Activated T-helper 1 cell treated with anti-CD3 and anti-CD28 coated beads, Interleukin-12 subunit alpha, Interleukin-12 subunit beta, Interleukin-2, Interleukin-4 antibody, amounts not matched to agents 30 ng/mL and 10 ng/mL and 1 ng/mL, durations not matched to agents 14 hours and 24 hours and 36 hours (primary cell): ENCODE measurements at regions of chr1 and their contacts with region 1.

Region 1: DNA sequence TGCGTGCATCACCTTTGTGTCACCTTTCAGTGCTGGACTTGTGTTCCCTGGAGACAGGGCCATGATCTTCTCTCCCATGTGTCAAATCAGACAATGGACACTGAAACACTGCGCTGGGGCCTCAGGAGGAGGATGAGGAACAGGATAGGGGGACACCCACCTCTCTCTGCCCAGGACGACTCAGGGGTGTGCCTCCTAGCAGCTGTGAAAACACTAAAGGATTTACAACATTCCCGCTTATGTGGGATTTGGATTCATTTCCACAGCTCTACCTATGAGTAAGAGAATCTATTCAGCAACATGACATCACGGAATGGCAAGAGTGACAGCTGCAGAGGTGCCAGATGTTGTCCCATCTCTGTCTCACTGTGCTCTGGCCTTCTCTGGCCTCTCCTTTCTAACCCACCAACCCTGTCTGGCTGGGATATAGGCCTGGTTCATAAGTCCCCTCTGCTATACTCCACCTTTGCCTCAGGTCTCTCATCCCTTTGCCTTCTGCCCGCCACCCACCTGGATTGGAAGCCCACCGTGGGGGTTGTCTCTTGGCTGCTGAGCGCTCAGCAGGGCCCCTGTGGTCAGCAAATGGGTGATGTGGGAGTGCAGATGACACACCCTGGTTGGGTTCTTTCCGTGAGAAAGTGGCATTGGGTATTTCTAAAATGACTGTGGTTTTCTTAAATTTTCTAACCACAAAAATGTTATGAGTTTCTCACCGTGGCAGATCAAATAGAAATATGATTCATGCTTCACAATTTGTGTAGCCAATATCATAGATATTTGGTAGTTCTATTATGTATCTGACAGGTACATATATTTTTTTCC is 47.1 kb upstream of the TLR5 start:
- DNase-seq: no peak
- H3K4me3 Mint-ChIP-seq: no peak overlapping the region
- H3K27ac Mint-ChIP-seq: peak overlapping the region; percentile 53
- H3K4me1 Mint-ChIP-seq: peaks cover 12% of the 10 kb centered on the region
- H3K27me3 Mint-ChIP-seq: peaks cover 12% of the 10 kb centered on the region

Region 2: GRCh38 chr1:222892137-222892769 is 297.9 kb before region 1 on chr1:
- intact Hi-C with region 1: loop called (anchors 10 kb)
- DNase-seq: no peak
- H3K4me3 Mint-ChIP-seq: no peak overlapping the region
- H3K27ac Mint-ChIP-seq: no peak overlapping the region
- H3K4me1 Mint-ChIP-seq: peaks cover 9% of the 10 kb centered on the region
- H3K27me3 Mint-ChIP-seq: peaks cover 1% of the 10 kb centered on the region

Region 3: GRCh38 chr1:223230161-223230881 is 40.2 kb after region 1 on chr1:
- intact Hi-C with region 1: loop called (anchors 1 kb)
- DNase-seq: no peak
- H3K4me3 Mint-ChIP-seq: no peak overlapping the region
- H3K27ac Mint-ChIP-seq: peak overlapping the region; percentile 53
- H3K4me1 Mint-ChIP-seq: peaks cover 17% of the 10 kb centered on the region
- H3K27me3 Mint-ChIP-seq: peaks cover 3% of the 10 kb centered on the region

Region 4: DNA sequence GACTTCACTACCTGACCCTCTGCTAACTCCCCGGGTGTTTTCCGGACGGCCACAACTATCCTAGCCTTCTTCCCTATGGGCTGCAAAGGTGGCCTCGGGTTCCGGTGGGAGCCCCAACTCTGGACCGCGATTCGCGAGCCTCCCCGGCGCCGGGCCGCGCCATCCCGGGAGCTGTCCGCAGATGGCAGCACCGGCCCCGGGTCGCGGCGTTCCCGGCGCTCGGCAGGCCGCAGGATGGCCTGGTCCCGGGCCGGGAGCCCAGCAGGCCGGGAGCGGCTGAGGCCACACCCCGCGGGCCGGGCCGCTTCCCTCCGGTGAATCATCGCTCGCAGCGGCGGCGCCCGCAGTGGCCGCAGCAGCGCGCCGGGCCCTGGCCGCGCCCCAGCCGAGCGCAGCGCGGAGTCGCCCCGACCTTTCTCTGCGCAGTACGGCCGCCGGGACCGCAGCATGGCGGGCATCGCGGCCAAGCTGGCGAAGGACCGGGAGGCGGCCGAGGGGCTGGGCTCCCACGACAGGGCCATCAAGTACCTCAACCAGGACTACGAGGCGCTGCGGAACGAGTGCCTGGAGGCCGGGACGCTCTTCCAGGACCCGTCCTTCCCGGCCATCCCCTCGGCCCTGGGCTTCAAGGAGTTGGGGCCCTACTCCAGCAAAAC is 522.2 kb after region 1 on chr1 and contains the start of gene CAPN2:
- intact Hi-C with region 1: loop called (anchors 5 kb)
- DNase-seq: peak; percentile 58
- H3K4me3 Mint-ChIP-seq: peak within 1 kb of the TSS; percentile 80
- H3K27ac Mint-ChIP-seq: peak within 1 kb of the TSS; percentile 88
- H3K4me1 Mint-ChIP-seq: peaks cover 62% of the 10 kb centered on the region
- H3K27me3 Mint-ChIP-seq: peaks cover 2% of the 10 kb centered on the region
- total RNA-seq, gene CAPN2: 66.3 and 70.4 TPM in 2 replicates